Cardiac septum (tissue), 1 donor: ENCODE measurements at regions of chr1 and their contacts with region 1.

Region 1: DNA sequence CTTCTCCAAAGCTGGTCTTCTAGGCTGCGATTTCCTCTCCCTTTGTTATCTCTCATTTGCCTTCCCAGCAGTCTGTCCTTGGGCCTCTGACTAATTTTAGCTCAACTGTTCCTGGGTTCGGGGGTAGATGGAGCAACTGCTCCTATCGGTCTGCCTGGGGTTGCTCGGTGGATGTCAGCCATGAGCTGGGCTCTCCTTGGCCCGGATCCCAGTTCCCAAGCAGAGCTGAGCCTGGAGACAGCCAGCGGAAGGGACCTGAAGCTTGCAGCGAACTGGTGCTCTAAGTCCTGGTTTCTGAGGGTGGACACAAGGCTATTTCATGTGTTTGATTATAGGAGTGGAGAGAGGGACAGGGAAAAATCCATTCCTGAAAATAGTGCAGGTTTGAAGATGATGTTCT is 423.0 kb downstream of the RPS6KC1 start:
- DNase-seq: no peak

Region 2: GRCh38 chr1:213381572-213382084 is 92.4 kb before region 1 on chr1:
- intact Hi-C with region 1: loop called (anchors 5 kb)
- DNase-seq: no peak

Region 3: DNA sequence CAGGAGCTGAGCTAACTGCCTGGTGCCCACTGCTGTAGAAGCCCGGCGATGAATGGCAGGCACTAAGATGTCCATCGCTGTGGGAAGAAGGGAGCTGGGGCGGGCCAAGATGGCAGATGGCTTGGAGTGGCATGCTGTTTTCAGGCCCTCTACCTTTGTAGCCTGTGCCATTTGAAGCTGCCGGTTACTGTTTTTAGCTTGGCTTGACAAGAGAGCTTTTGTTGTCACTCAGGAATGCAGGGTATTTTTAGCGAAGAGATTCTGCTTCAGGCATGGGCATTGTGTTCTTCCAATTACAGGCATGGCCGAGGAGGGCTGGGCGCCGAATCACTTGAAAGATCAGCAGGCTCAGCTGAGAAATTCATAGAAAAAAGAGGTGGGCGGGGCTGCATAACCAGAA is 74.4 kb before region 1 on chr1:
- intact Hi-C with region 1: loop called (anchors 5 kb)
- DNase-seq: no peak

Region 4: DNA sequence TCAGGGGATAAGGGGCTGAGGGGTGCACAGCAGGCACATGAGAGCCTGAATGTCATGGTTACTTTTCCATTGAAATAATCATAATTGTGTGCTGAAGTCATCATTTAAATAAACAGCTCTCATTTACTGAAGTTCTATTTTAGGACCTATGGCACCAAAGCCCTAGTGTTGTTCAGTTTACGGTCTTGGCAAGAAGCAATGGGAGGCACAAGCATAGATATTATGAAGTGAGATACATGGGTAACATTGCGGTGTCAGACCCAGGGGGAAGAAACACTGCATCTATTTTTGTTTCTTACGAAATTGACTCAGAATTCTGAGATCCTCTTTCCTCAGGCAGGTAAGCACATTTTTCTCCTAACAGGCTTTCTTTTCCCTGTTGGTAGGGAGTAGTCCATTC is 75.9 kb after region 1 on chr1:
- intact Hi-C with region 1: loop called (anchors 5 kb)
- DNase-seq: no peak

Region 5: GRCh38 chr1:213852107-213852506 is 378.1 kb after region 1 on chr1:
- intact Hi-C with region 1: no loop called
- DNase-seq: no peak